Gastrocnemius medialis (tissue), 4 donors: ENCODE measurements at regions of chr2 and their contacts with region 1.

Region 1: DNA sequence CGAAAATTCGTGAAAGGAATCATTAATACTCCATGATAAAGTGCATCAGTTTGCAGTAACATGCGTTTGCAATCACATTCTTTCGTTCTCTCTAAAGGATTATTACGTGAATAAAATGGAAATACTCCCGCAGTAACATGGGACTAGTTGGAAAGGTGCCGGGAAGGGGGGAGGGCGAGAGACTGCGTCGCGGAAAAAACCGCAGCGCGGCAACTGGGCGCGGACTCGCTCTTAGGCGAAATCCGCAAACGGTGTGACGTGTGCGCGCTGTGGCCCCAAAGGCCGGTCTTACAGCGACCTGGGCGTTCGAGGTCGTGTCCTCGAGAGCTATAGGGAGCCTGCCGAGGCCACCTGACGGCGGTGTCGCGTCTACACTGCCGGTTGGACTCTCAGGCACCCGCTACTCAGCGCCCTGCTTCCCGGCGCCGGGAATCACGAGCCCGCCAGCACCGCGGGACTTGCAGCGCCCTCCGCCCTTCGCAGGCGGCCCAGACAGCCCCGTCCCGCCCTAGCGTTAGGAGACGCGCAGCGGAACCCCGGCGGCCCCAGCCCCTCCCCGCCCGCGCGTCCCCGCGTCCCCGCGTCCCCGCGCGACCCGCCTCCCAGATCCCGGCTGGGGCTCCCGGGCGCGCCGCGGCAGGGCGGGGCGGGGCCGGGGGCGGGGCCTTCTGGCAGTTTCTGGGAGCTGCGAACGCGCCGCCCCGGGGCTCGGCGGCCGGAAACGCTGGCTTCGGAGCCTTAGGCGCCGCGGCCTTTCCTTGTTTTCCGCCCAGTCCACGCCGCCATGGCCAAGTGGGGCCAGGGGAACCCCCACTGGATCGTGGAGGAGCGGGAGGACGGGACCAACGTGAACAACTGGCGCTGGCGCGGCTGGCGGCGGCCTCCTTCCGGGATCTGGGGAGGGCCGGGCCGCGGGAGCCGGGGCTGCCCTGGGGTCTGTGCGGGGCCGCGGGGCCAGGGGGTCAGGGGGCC is 15.1 kb downstream of the C2orf74 start:
- DNase-seq: peak; percentile 86 to 90
- ATAC-seq: peak; percentile 75 to 79
- H3K4me3 ChIP-seq: peak overlapping the region; percentile 62 to 93 (median 84)
- H3K27ac ChIP-seq: peak overlapping the region; percentile 93 to 99 (median 98)
- H3K4me1 ChIP-seq: peaks cover 36 to 40% of the 10 kb centered on the region in 2 donors
- H3K27me3 ChIP-seq: no peaks in the 10 kb centered on the region
- CTCF ChIP-seq: peak in 2 of 5 experiments; percentile 24 to 31
- POLR2A ChIP-seq: peak; percentile 88 to 90

Region 2: DNA sequence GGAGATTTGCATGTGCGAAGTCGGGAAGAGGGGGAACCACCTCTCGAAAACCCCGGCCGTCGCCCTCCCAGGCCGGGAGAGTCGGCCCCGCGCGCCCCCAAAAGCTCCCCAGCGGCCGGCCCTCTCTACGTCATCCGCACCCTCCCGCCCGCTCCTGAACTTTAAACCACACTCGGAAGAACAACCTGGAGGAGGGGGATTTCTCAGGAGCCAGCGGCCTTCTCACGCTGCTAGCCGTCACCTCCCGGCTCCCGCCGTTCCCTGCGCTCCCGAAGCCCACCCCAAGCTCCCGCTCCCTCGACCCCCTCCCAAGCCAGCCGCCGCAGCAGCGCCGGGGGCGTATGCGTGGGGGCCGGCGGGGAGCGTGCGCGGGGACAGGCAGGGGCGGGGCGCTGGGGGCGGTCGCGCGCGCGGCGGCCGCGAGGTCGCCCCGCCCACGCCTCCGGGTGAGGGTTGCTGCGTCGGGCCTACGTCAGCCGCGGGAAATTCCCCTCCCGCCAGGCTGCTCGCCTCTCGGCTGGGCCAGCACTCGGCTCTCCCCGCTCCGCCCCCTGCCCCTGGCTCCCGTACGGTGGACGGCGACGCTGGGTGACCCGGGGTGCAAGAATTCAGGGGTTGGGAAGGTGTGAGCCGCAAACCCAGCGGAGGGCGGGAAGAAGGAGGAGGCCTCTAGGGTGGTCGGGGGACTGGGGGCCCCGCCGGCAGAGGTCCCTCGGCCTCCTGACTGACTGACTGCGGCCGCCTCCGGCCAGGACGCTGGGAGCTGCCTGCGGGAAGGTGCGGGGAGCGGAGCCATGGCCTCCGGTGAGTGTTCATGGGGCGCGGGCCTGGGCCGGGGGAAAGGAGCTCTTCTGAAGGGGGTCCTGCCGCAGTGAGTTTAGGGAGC is 295.8 kb before region 1 on chr2 and contains the start of gene REL:
- in situ Hi-C with region 1: no loop called
- intact Hi-C with region 1: loop called (anchors 1 kb)
- DNase-seq: peak; percentile 84
- ATAC-seq: peak; percentile 91 to 92
- H3K4me3 ChIP-seq: peak within 1 kb of the TSS; percentile 69 to 99 (median 75)
- H3K27ac ChIP-seq: peak within 1 kb of the TSS; percentile 89 to 100 (median 91)
- H3K4me1 ChIP-seq: peaks cover 27 to 42% of the 10 kb centered on the region in 2 donors
- H3K27me3 ChIP-seq: no peaks in the 10 kb centered on the region
- CTCF ChIP-seq: no peak
- POLR2A ChIP-seq: peak; percentile 81 to 89
- total RNA-seq, gene REL: 4.2 to 7.6 (median 5.4) TPM

Region 3: DNA sequence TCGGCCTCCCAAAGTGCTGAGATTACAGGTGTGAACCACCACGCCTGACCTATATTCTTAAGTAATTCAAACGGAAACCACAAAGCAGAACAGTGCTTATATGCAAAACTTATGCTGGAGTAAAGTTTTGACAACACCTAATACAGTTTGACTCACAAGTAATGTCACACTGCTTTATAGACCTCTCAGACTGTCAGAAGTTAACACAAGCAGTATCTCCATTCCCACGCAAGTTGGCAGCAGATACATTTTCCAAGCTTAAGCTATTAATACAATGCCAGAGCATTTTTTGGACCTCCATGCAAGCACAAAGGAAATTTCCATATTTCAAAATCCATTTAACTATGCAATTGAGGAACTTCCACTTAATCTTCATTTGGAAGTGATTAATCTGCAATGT is 132.4 kb before region 1 on chr2:
- in situ Hi-C with region 1: no loop called
- intact Hi-C with region 1: loop called (anchors 5 kb)
- DNase-seq: no peak
- ATAC-seq: peak in 1 of 2 donors; percentile 15
- H3K4me3 ChIP-seq: no peak overlapping the region
- H3K27ac ChIP-seq: peak overlapping the region; percentile 62 to 87 (median 76)
- H3K4me1 ChIP-seq: peaks cover 20 to 34% of the 10 kb centered on the region in 2 donors
- H3K27me3 ChIP-seq: no peaks in the 10 kb centered on the region
- CTCF ChIP-seq: no peak
- POLR2A ChIP-seq: no peak

Region 4: GRCh38 chr2:61144697-61145268 is 32.3 kb before region 1 on chr2:
- in situ Hi-C with region 1: no loop called
- intact Hi-C with region 1: loop called (anchors 1 kb)
- DNase-seq: peak; percentile 85 to 93
- ATAC-seq: peak; percentile 99 to 100
- H3K4me3 ChIP-seq: peak overlapping the region; percentile 53 to 75 (median 67)
- H3K27ac ChIP-seq: peak overlapping the region; percentile 69 to 85 (median 73)
- H3K4me1 ChIP-seq: peaks cover 4 to 7% of the 10 kb centered on the region in 2 donors
- H3K27me3 ChIP-seq: no peaks in the 10 kb centered on the region
- CTCF ChIP-seq: no peak
- POLR2A ChIP-seq: peak; percentile 21 to 36

Region 5: GRCh38 chr2:61538200-61538919 is 361.3 kb after region 1 on chr2 and contains the start of gene XPO1:
- in situ Hi-C with region 1: no loop called
- intact Hi-C with region 1: loop called (anchors 1 kb)
- DNase-seq: peak; percentile 99
- ATAC-seq: peak; percentile 80 to 82
- H3K4me3 ChIP-seq: peak within 1 kb of the TSS; percentile 73 to 94 (median 82)
- H3K27ac ChIP-seq: peak within 1 kb of the TSS; percentile 97 to 99 (median 99)
- H3K4me1 ChIP-seq: peaks cover 29 to 30% of the 10 kb centered on the region in 2 donors
- H3K27me3 ChIP-seq: no peaks in the 10 kb centered on the region
- CTCF ChIP-seq: peak in 2 of 5 experiments; percentile 6 to 10
- POLR2A ChIP-seq: peak; percentile 90 to 91
- total RNA-seq, gene XPO1: 34.3 to 69.1 (median 56.3) TPM